BJ (cell line): ENCODE measurements at regions of chr3 and their contacts with region 1.

Region 1: GRCh38 chr3:66407611-66408218 is 93.1 kb downstream of the LRIG1 start:
- DNase-seq: no peak
- H3K4me3 ChIP-seq: no peak overlapping the region
- H3K27me3 ChIP-seq: no peaks in the 10 kb centered on the region
- CTCF ChIP-seq: peak; percentile 91

Region 2: DNA sequence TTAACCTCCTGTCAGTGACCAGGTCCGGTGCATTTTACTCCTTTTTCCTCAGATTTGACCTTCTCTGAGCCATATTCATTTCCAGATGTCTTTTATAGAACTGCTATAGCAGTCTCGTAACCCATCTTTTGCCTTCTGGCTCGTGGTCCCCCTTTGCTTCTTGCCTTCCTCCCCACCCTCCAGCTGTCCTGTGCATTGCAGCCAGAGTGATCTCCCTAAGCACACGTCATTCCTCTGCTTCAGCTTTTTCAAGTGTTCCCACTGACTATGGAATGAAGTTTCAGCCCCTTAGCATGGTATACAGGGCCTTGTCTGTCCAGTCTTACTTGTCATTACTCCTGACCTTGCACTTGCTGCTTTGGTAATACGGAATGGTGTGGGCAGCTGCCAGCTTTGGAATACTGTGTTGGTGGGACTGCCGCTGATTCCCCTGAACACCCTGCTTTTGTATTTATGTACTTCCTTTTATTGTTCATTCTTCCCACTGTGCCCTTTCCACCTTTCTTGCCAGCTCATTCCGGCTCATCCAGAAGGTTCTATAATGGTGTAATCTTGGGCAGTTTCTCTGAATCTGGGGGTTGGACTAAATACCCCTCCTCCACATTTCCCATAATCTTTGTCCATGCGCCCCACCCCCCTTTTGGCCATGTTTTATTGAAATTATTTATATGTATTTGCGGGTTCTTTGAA is 148.0 kb before region 1 on chr3:
- CTCF ChIA-PET with region 1: no interaction called
- POLR2A ChIA-PET with region 1: no interaction called
- DNase-seq: no peak
- H3K4me3 ChIP-seq: no peak overlapping the region
- H3K27me3 ChIP-seq: no peaks in the 10 kb centered on the region
- CTCF ChIP-seq: no peak

Region 3: DNA sequence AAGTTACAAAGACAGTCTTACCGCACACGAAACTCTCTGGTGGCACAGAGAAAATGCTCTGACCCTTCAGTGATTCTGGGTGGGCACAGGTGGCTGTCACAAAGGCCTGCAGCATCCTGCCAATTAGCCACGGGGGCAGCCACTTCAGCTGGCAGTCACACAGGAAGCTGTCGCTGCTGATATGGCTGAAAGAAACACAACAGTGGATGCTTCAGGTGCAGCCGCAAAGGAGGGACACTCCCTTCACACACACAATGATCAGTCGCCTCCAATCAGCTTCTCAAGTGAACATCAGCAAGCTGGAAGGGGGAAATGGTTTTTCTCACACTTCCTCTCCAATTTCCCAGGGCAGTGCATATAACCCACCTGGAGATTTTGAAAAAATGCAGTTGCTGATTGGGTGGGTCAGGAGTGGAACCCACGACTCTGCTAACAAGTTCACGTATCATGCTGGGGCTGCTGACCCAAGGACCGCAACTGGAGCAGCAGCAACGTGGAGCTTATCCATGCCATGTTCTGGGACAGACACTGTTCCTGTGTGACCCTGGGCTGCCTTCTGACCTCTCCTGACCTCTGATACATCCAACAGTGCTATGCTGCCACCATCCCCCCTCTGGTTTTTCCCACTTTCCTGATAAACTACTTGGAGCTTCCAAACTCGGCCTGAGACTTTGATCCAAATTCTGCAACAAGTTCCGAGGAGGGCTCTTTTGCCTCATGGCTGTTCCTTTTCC is 13.5 kb before region 1 on chr3:
- CTCF ChIA-PET with region 1: interaction called, 15 read pairs
- POLR2A ChIA-PET with region 1: interaction called, 4 read pairs
- DNase-seq: no peak
- H3K4me3 ChIP-seq: no peak overlapping the region
- H3K27me3 ChIP-seq: no peaks in the 10 kb centered on the region
- CTCF ChIP-seq: no peak

Region 4: DNA sequence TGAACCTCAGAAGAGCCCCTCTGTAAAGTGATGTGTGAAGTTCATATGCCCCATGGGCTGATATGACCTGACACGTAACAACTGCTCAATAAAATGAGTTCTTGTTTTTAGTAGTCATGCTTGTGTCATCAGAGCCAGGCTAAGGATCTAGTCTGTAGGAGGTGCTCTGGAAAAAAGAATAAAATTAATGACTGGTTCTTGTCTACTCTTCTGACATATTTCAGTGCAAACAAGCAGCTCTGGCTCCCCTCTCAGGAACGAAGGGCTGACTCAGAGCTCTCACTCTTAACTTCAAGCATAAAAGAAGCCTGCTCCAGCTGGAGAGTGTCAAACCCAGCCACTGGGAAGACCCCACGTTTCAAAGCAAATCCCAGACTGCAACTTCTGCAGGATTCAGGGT is 16.1 kb after region 1 on chr3:
- CTCF ChIA-PET with region 1: interaction called, 10 read pairs
- POLR2A ChIA-PET with region 1: no interaction called
- DNase-seq: no peak
- H3K4me3 ChIP-seq: no peak overlapping the region
- H3K27me3 ChIP-seq: no peaks in the 10 kb centered on the region
- CTCF ChIP-seq: no peak

Region 5: GRCh38 chr3:66485291-66485968 is 77.7 kb after region 1 on chr3:
- CTCF ChIA-PET with region 1: interaction called, 12 read pairs
- POLR2A ChIA-PET with region 1: no interaction called
- DNase-seq: no peak
- H3K4me3 ChIP-seq: no peak overlapping the region
- H3K27me3 ChIP-seq: no peaks in the 10 kb centered on the region
- CTCF ChIP-seq: no peak

Region 6: GRCh38 chr3:66816090-66816761 is 408.5 kb after region 1 on chr3:
- CTCF ChIA-PET with region 1: interaction called, 61 read pairs
- POLR2A ChIA-PET with region 1: no interaction called
- DNase-seq: no peak
- H3K4me3 ChIP-seq: no peak overlapping the region
- H3K27me3 ChIP-seq: peaks cover 2% of the 10 kb centered on the region
- CTCF ChIP-seq: peak; percentile 43